HepG2 (cell line): ENCODE measurements at regions of chr15 and their contacts with region 1.

Region 1: GRCh38 chr15:50182219-50183013 is 420 bp downstream of the SLC27A2 start:
- DNase-seq: no peak
- ATAC-seq: peak; percentile 83
- H3K4me3 ChIP-seq: peak overlapping the region; percentile 58 to 86 (median 83)
- H3K27ac ChIP-seq: peak overlapping the region; percentile 23
- H3K4me1 ChIP-seq: peaks cover 58% of the 10 kb centered on the region
- H3K27me3 ChIP-seq: no peaks in the 10 kb centered on the region
- CTCF ChIP-seq: no peak
- EP300 ChIP-seq: no peak
- POLR2A ChIP-seq: peak in 1 of 2 experiments; percentile 60; a peak in 2 of 4 replicates
- RAD21 ChIP-seq: no peak; the same call in 1 of the 2 replicates

Region 2: GRCh38 chr15:50192926-50193620 is 10.7 kb after region 1 on chr15:
- CTCF ChIA-PET with region 1: no interaction called
- POLR2A ChIA-PET with region 1: no interaction called
- in situ Hi-C with region 1: no loop called
- intact Hi-C with region 1: no loop called
- DNase-seq: no peak
- ATAC-seq: no peak
- H3K4me3 ChIP-seq: no peak overlapping the region
- H3K27ac ChIP-seq: no peak overlapping the region
- H3K4me1 ChIP-seq: peaks cover 52% of the 10 kb centered on the region
- H3K27me3 ChIP-seq: no peaks in the 10 kb centered on the region
- CTCF ChIP-seq: no peak
- EP300 ChIP-seq: no peak
- POLR2A ChIP-seq: no peak
- RAD21 ChIP-seq: no peak

Region 3: GRCh38 chr15:50224606-50225005 is 42.2 kb after region 1 on chr15:
- CTCF ChIA-PET with region 1: no interaction called
- POLR2A ChIA-PET with region 1: no interaction called
- in situ Hi-C with region 1: no loop called
- intact Hi-C with region 1: loop called (anchors 1 kb)
- DNase-seq: no peak
- ATAC-seq: no peak
- H3K4me3 ChIP-seq: no peak overlapping the region
- H3K27ac ChIP-seq: no peak overlapping the region
- H3K4me1 ChIP-seq: peaks cover 12% of the 10 kb centered on the region
- H3K27me3 ChIP-seq: no peaks in the 10 kb centered on the region
- CTCF ChIP-seq: no peak
- EP300 ChIP-seq: no peak
- POLR2A ChIP-seq: no peak
- RAD21 ChIP-seq: no peak

Region 4: GRCh38 chr15:50315814-50316630 is 133.6 kb after region 1 on chr15:
- CTCF ChIA-PET with region 1: interaction called, 16 read pairs
- POLR2A ChIA-PET with region 1: no interaction called
- in situ Hi-C with region 1: loop called (anchors 10 kb)
- intact Hi-C with region 1: loop called (anchors 2 kb)
- DNase-seq: peak; percentile 42
- ATAC-seq: peak; percentile 49; the same call in 1 of the 3 replicates
- H3K4me3 ChIP-seq: no peak overlapping the region
- H3K27ac ChIP-seq: no peak overlapping the region
- H3K4me1 ChIP-seq: no peaks in the 10 kb centered on the region
- H3K27me3 ChIP-seq: no peaks in the 10 kb centered on the region
- CTCF ChIP-seq: peak; percentile 64
- EP300 ChIP-seq: no peak
- POLR2A ChIP-seq: no peak
- RAD21 ChIP-seq: peak; percentile 36; the same call in 1 of the 2 replicates